HEK293 (cell line): ENCODE measurements at regions of chr17 and their contacts with region 1.

Region 1: DNA sequence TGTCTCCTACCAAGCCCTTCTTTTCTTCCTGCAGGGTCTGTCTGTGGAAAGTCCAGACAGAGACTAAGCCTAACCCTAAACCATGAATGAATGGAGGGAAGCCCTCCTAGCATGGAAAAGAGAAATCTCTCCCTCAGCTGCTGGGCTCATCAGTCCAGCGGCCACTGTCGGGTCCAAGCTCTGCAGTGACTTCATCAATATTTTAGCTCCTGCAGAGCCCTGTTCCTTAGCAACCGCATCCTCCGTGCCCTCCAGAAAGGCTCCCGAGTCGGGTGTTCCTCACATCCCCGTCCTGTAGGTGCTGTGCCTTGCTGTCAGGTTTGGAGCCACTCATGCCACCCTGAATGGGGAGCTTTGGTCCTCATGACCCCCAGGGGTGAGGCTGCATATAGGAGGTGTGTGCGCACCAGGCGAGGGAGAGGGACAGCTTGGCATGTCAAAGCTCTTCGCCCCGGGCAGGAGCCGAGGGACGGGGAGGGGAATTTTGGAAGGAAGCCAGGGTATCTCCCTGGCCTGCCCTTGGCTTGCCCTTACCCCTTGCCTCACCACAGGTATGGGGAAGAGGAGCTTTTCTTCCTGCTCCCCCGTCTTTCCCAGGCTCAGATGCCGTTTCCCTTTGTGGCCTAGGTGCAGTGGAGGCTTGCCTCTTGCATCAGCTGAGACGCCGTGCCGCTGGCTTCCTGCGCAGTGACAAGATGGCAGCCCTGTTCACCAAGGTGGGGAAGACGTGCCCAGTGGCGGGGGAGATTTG is 23.9 kb downstream of the SGSM2 start:
- H3K4me3 ChIP-seq: no peak overlapping the region
- H3K27ac ChIP-seq: no peak overlapping the region
- H3K4me1 ChIP-seq: peaks cover 9% of the 10 kb centered on the region
- CTCF ChIP-seq: no peak

Region 2: GRCh38 chr17:2253768-2254406 is 107.3 kb before region 1 on chr17:
- CTCF ChIA-PET with region 1: no interaction called
- POLR2A ChIA-PET with region 1: no interaction called
- H3K4me3 ChIP-seq: no peak overlapping the region
- H3K27ac ChIP-seq: no peak overlapping the region
- H3K4me1 ChIP-seq: no peaks in the 10 kb centered on the region
- CTCF ChIP-seq: no peak

Region 3: GRCh38 chr17:2347547-2348307 is 13.5 kb before region 1 on chr17:
- CTCF ChIA-PET with region 1: interaction called, 20 read pairs
- POLR2A ChIA-PET with region 1: interaction called, 10 read pairs
- H3K4me3 ChIP-seq: no peak overlapping the region
- H3K27ac ChIP-seq: peak overlapping the region; percentile 48; the same call in 1 of the 2 replicates
- H3K4me1 ChIP-seq: peaks cover 12% of the 10 kb centered on the region
- CTCF ChIP-seq: no peak